Activated T-helper 2 cell treated with anti-CD3 and anti-CD28 coated beads, Interferon-gamma antibody, Interleukin-2, Interleukin-4, amounts not matched to agents 10 μg/mL and 5 μg/mL and 100 μg/mL, durations not matched to agents 14 hours and 24 hours and 36 hours (primary cell): ENCODE measurements at regions of chrX and their contacts with region 1.

Region 1: GRCh38 chrX:74343343-74344279 is 39.6 kb downstream of the ZCCHC13 start:
- DNase-seq: peak; percentile 12
- H3K4me3 Mint-ChIP-seq: no peak overlapping the region
- H3K27ac Mint-ChIP-seq: no peak overlapping the region
- H3K4me1 Mint-ChIP-seq: peaks cover 3% of the 10 kb centered on the region
- H3K27me3 Mint-ChIP-seq: no peaks in the 10 kb centered on the region

Region 2: DNA sequence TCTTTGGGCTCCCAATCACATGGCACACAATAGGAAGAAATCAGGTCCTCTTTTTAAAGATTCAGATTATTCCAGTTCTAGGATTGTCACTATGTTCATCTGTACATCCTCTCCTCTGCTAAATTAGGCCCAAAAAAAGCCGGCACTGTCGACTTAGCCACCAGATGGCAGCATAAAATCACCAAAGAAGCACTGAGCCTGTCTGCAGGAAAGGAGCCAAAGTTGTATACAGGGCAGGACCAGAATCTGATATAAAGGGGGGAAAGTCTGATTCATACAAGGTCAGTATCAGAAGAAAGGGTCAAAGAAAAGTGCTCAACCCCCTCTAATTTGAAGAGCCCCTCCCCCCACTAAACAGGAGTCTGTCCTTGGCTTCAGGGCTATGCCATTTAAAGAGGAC is 488.1 kb before region 1 on chrX:
- intact Hi-C with region 1: loop called (anchors 2 kb)
- DNase-seq: peak; percentile 18
- H3K4me3 Mint-ChIP-seq: no peak overlapping the region
- H3K27ac Mint-ChIP-seq: no peak overlapping the region
- H3K4me1 Mint-ChIP-seq: no peaks in the 10 kb centered on the region
- H3K27me3 Mint-ChIP-seq: no peaks in the 10 kb centered on the region

Region 3: DNA sequence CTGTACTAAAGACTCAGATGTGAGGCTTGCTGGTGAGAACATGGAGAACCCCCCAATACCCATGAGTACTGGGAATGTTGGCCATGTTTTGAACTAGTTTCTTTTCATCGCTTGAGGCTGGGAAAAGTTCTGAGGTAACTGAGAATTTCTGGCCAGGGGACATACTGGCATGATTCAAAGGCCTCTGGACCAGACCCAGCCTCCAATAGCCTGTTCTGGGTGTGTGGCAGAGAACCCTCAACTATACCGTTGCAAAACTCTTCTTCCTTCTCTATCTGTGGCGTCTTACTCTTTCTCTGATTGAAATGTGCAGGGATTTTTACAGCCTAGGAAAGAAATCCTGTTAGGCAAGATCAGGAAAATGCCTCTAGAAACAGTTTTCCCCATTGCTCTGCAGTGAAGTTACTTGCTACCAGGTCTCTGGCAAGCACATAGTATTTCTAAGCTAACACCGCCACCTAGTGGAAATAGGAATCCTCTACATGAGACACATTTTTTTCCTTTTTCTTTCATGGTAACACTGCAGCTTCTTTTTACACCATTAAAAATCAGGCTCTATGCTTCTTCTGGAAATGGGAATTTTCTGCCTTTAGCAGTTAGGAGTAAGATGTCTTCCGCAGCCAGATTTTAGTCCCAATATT is 210.3 kb before region 1 on chrX:
- intact Hi-C with region 1: loop called (anchors 2 kb)
- DNase-seq: no peak
- H3K4me3 Mint-ChIP-seq: no peak overlapping the region
- H3K27ac Mint-ChIP-seq: no peak overlapping the region
- H3K4me1 Mint-ChIP-seq: no peaks in the 10 kb centered on the region
- H3K27me3 Mint-ChIP-seq: no peaks in the 10 kb centered on the region

Region 4: GRCh38 chrX:74248889-74249288 is 94.7 kb before region 1 on chrX:
- intact Hi-C with region 1: loop called (anchors 10 kb)
- DNase-seq: no peak
- H3K4me3 Mint-ChIP-seq: no peak overlapping the region
- H3K27ac Mint-ChIP-seq: no peak overlapping the region
- H3K4me1 Mint-ChIP-seq: no peaks in the 10 kb centered on the region
- H3K27me3 Mint-ChIP-seq: no peaks in the 10 kb centered on the region

Region 5: GRCh38 chrX:74291964-74292807 is 51.4 kb before region 1 on chrX:
- intact Hi-C with region 1: loop called (anchors 2 kb)
- DNase-seq: peak; percentile 68
- H3K4me3 Mint-ChIP-seq: peak overlapping the region; percentile 97
- H3K27ac Mint-ChIP-seq: peak overlapping the region; percentile 100
- H3K4me1 Mint-ChIP-seq: peaks cover 14% of the 10 kb centered on the region
- H3K27me3 Mint-ChIP-seq: no peaks in the 10 kb centered on the region

Region 6: DNA sequence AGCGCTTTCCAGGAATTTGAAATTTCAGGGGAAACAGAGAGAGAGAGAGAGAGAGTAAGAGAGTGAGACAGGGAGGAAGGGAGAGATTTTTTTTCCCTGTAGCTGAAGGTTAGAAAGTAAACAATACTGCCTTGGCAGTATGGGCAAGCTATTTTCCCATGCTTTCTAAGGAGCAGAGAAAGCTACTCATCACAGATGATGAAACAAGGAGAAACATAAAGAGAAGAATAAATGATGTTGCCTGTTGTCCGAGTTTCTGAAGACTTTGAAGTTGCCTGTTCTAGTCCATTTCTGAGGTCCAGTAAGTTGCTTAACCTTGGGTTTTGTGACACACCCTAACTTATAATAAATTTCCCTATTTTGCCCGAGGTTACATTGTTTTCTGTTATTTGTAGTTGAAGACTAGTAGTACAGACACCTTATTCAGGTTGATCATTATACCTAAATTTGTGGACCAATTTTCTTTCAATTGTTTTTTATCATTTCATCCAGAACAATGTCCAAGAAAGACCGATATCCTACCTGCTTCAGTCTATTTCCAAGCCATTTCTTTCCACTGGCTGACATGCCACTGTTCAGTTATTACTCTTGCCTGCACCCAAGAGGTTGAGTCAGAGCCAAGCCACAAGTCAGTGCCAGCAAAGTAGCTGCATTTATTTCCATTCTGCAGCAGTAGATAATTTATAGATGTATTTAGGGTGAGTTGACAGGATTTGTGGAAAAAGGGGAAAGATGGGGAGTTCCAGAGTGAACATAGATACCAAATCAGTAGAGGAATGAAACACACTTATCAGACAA is 28.0 kb after region 1 on chrX:
- intact Hi-C with region 1: no loop called
- DNase-seq: no peak
- H3K4me3 Mint-ChIP-seq: no peak overlapping the region
- H3K27ac Mint-ChIP-seq: no peak overlapping the region
- H3K4me1 Mint-ChIP-seq: peaks cover 5% of the 10 kb centered on the region
- H3K27me3 Mint-ChIP-seq: peaks cover 5% of the 10 kb centered on the region